ENCODE measurements at regions of chr12 and their contacts with region 1.

Region 1: GRCh38 chr12:42421844-42422779 is 96.1 kb downstream of the PPHLN1 start:
- DNase-seq: peak; percentile 7
- ATAC-seq: peak; percentile 95
- H3K4me3 ChIP-seq: no peak overlapping the region
- H3K27ac ChIP-seq: peak overlapping the region; percentile 62; the same call in 1 of the 2 replicates
- H3K4me1 ChIP-seq: peaks cover 13% of the 10 kb centered on the region
- H3K27me3 ChIP-seq: no peaks in the 10 kb centered on the region
- CTCF ChIP-seq: no peak
- EP300 ChIP-seq: peak in 1 of 2 experiments; percentile 42; a peak in 1 of 4 replicates
- POLR2A ChIP-seq: no peak
- RAD21 ChIP-seq: no peak

Region 2: DNA sequence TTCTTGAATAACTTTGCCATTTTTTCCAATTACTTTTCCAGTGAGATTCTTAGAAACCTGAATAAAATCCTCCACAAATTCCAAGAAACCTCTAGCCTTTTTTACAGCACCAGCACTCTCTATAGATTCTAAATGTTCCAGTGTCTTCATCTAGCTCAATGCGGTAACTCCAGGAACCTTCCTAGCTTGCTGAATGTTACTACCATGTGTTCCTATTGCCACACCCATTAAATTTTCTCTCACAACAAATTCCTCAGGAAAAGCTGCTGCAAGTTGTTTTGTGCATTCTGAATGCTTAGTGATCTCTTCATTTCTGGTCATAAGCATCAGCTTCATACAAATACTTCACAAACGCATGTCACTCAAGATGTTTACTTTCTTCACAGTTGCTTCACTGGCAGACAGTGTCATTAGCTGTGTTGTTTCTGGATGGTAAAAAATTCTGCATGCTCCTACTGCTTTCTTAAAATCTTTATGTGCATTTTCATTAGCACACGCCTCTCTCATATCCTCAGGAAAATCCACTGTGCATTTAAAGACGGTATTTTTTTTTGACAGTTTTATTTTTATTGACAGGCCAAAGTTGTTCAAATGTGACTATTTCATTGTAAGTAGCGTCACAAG is 10.5 kb after region 1 on chr12:
- CTCF ChIA-PET with region 1: interaction called, 10 read pairs
- POLR2A ChIA-PET with region 1: interaction called, 4 read pairs
- RAD21 ChIA-PET with region 1: no interaction called
- SMC1A ChIA-PET with region 1: interaction called, 4 read pairs
- in situ Hi-C with region 1: no loop called
- intact Hi-C with region 1: no loop called
- DNase-seq: no peak
- ATAC-seq: no peak
- H3K4me3 ChIP-seq: no peak overlapping the region
- H3K27ac ChIP-seq: no peak overlapping the region
- H3K4me1 ChIP-seq: no peaks in the 10 kb centered on the region
- H3K27me3 ChIP-seq: no peaks in the 10 kb centered on the region
- CTCF ChIP-seq: no peak
- EP300 ChIP-seq: no peak
- POLR2A ChIP-seq: no peak
- RAD21 ChIP-seq: no peak

Region 3: DNA sequence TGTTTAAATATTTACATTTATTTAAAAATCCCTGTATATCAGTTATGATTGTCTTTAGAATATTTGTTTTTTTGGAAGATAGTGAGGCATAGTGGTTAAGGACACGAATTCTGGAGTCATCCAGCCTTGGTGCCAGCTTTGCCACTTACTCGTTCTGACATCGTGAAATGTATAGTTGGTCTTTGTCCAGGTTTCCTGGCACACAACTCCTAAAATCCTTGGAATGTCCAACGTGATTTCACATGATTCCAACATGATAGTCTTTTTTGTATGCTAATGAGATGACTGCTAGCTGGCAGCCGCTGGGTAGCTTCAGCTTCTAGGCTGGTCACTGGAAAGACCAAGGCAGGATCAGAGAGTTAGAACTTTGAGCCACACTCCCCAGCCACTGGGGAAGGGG is 102.6 kb after region 1 on chr12:
- CTCF ChIA-PET with region 1: no interaction called
- POLR2A ChIA-PET with region 1: no interaction called
- RAD21 ChIA-PET with region 1: no interaction called
- SMC1A ChIA-PET with region 1: no interaction called
- in situ Hi-C with region 1: no loop called
- intact Hi-C with region 1: no loop called
- DNase-seq: no peak
- ATAC-seq: no peak
- H3K4me3 ChIP-seq: no peak overlapping the region
- H3K27ac ChIP-seq: no peak overlapping the region
- H3K4me1 ChIP-seq: no peaks in the 10 kb centered on the region
- H3K27me3 ChIP-seq: no peaks in the 10 kb centered on the region
- CTCF ChIP-seq: no peak
- EP300 ChIP-seq: no peak
- POLR2A ChIP-seq: no peak
- RAD21 ChIP-seq: no peak